Left colon (tissue), 2 donors: ENCODE measurements at regions of chr13 and their contacts with region 1.

Region 1: GRCh38 chr13:51286135-51287002 is 53.1 kb upstream of the SERPINE3 start:
- DNase-seq: peak; percentile 61 to 85
- ATAC-seq: peak; percentile 88

Region 2: DNA sequence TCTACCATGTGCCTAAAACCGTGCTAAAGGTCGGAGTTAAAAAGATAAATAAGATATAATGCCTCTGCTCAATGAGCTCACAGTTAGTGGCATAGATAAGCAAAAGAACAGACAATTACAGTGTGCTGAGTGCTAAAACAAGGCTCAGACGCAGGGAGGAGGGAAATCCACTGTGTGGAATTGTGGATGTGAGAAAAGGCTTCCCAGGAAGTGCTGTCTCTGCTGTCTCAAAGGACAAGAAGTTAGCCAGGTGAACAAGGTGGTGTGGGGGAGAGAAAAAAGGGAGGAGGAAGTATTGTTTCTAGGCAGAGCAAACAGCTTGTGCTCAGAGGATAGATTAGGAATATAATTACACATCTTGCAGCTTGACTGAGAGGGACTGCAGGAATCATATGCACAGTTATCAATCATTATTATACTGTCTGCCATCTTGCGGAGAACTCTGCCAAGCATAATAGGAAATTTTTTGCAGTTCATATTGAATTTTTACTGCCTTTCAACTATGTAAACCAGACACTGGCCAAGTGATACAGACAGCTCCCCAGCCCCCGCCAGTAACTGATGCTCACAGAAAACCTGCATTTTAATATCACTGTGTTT is 184.6 kb before region 1 on chr13:
- intact Hi-C with region 1: no loop called
- DNase-seq: no peak
- ATAC-seq: no peak

Region 3: GRCh38 chr13:51148952-51149573 is 137.3 kb before region 1 on chr13:
- intact Hi-C with region 1: loop called in 1 of 2 experiments (anchors 2 kb)
- DNase-seq: no peak
- ATAC-seq: peak; percentile 31

Region 4: GRCh38 chr13:51222037-51222685 is 64.2 kb before region 1 on chr13 and contains the start of gene FAM124A:
- intact Hi-C with region 1: loop called in 1 of 2 experiments (anchors 5 kb)
- DNase-seq: peak in 1 of 2 donors; percentile 55
- ATAC-seq: peak; percentile 94
- total RNA-seq, gene FAM124A: 0.89 to 3.1 TPM